OCI-LY7 (cell line): ENCODE measurements at regions of chr14 and their contacts with region 1.

Region 1: DNA sequence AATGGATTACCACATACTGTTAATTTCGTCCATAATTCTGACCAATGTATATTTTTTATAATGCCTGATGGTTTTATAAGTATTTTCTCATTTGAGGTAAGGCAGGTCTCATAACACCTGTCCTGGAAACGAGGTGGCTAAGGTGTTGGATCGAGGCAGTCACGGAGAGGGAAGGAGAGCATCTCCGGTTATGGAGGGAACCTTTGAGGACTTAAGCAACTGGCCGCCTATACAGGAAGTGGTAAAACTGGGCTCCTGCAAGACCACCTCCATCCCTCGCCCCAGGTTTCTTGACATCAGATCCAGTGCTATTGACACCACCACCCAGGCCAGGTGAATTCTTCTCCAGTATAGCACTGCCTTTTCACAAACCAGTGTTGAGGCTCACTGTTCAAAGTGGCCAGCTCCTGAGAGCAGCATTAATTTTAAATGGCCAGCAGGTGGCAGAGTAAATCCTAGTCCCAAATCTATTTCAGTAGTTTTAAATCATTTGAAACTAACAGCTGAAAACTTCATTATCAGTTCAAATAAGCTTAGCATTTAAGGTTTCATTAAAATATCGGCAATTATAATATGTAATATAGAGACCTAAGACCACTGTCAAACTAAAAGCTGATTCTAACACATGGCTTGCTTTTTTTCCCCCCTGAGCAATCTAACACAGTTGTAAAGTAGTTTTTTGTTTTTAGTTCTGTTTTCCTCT is 100.8 kb downstream of the PPM1A start:
- DNase-seq: peak; percentile 83
- H3K4me3 ChIP-seq: peak overlapping the region; percentile 57
- H3K27ac ChIP-seq: peak overlapping the region; percentile 95
- H3K4me1 ChIP-seq: peaks cover 61% of the 10 kb centered on the region
- CTCF ChIP-seq: peak; percentile 96

Region 2: GRCh38 chr14:59964251-59965007 is 385.4 kb before region 1 on chr14:
- CTCF ChIA-PET with region 1: interaction called, 4 read pairs
- POLR2A ChIA-PET with region 1: interaction called, 3 read pairs
- intact Hi-C with region 1: loop called (anchors 5 kb)
- DNase-seq: peak; percentile 15
- H3K4me3 ChIP-seq: peak overlapping the region; percentile 56
- H3K27ac ChIP-seq: peak overlapping the region; percentile 73
- H3K4me1 ChIP-seq: peaks cover 14% of the 10 kb centered on the region
- CTCF ChIP-seq: no peak

Region 3: GRCh38 chr14:60204104-60204842 is 145.5 kb before region 1 on chr14:
- CTCF ChIA-PET with region 1: no interaction called
- POLR2A ChIA-PET with region 1: interaction called, 3 read pairs
- intact Hi-C with region 1: loop called (anchors 2 kb)
- DNase-seq: peak; percentile 94
- H3K4me3 ChIP-seq: peak overlapping the region; percentile 52
- H3K27ac ChIP-seq: peak overlapping the region; percentile 96
- H3K4me1 ChIP-seq: peaks cover 44% of the 10 kb centered on the region
- CTCF ChIP-seq: no peak

Region 4: DNA sequence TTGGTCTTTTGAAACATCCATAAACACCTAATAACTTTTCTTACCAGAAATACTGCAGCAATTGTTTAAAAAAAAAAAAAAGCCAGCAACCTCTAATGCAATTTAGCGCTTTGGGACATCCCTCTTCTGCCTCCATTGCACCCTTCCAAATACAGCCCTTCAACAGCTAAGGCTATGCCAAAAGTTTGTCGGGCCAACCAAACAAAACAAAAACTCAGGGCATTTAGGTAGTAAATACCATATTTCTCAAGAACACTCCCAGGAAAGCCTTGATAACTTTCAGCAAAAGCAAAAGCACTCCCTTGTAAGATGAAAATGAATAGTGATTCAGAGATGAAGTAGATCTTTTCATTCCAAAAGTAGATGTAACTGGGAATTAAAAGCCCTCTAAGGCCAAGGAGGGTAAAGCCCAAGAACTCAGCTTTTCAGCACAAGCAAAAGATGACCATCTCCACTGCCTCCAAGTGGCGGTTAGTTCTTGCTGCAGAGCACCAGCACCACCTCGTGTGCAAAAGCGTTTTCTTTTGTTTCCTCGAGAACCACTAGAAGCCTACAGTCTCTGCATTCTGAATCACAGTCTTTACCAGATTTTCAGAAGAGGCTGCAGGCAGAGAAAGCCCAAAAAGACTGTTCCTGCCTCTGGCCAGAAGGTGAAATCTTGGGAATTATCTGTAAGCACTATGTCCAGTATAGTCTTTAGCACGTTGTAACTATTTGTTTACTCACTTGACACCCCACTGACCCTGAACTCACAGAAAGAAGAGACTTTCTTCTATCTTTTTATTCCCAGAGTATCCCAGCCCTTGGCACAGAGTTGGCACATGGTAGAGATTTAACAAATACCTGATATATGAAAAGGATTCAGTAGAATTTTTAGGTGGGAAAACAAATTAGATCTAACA is 212.3 kb after region 1 on chr14:
- CTCF ChIA-PET with region 1: interaction called, 4 read pairs
- POLR2A ChIA-PET with region 1: interaction called, 8 read pairs
- intact Hi-C with region 1: loop called (anchors 1 kb)
- DNase-seq: peak; percentile 90
- H3K4me3 ChIP-seq: no peak overlapping the region
- H3K27ac ChIP-seq: no peak overlapping the region
- H3K4me1 ChIP-seq: peaks cover 78% of the 10 kb centered on the region
- CTCF ChIP-seq: peak; percentile 97

Region 5: GRCh38 chr14:61252369-61253063 is 902.7 kb after region 1 on chr14:
- CTCF ChIA-PET with region 1: no interaction called
- POLR2A ChIA-PET with region 1: no interaction called
- intact Hi-C with region 1: loop called (anchors 5 kb)
- DNase-seq: peak; percentile 89
- H3K4me3 ChIP-seq: peak overlapping the region; percentile 40
- H3K27ac ChIP-seq: peak overlapping the region; percentile 69
- H3K4me1 ChIP-seq: peaks cover 23% of the 10 kb centered on the region
- CTCF ChIP-seq: peak; percentile 98